Activated CD8-positive, alpha-beta T cell treated with anti-CD3 and anti-CD28 coated beads for 36 hours (primary cell): ENCODE measurements at regions of chr18 and their contacts with region 1.

Region 1: DNA sequence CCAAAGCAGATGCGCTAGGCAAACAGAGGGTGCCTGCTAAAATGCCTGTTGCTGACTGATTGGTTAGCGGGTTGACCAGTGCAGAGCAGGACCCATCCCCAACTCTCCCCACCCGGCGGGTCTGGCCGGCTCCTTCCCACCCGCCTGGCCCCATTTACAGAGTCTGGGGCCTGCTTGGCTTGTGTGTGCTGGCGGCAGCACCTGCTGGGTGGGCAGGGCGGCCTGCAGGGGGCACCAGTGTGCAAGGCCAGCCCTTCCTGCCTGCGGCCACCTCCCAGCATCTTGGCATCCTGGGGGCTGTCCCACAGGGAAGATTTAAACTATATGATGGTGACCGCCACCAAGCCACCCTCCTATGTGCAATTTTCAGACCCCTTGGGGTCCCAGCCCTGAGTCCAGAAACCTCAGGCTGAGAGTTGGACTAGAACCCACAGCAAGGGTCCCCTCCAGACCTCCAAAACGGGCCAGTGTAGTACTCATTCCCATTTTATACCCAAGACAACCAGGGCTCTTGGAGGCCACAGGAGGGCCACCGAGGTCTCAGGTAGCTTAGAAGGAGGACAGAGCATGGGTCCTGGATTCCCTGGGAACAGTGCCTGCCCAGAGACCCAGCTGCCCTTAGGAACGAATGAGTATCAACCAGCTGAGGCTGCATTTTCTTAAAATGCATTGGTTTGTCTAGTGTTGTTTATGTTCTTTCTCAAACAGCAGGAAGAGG is 173.6 kb downstream of the SMAD7 start:
- DNase-seq: peak; percentile 75
- ATAC-seq: peak; percentile 95
- H3K4me3 Mint-ChIP-seq: no peak overlapping the region
- H3K27ac Mint-ChIP-seq: peak overlapping the region; percentile 20
- H3K4me1 Mint-ChIP-seq: peaks cover 5% of the 10 kb centered on the region
- H3K27me3 Mint-ChIP-seq: no peaks in the 10 kb centered on the region
- CTCF ChIP-seq: peak; percentile 93

Region 2: GRCh38 chr18:48848641-48849159 is 71.5 kb after region 1 on chr18:
- CTCF ChIA-PET with region 1: no interaction called
- POLR2A ChIA-PET with region 1: no interaction called
- intact Hi-C with region 1: no loop called
- DNase-seq: no peak
- ATAC-seq: no peak
- H3K4me3 Mint-ChIP-seq: no peak overlapping the region
- H3K27ac Mint-ChIP-seq: no peak overlapping the region
- H3K4me1 Mint-ChIP-seq: peaks cover 47% of the 10 kb centered on the region
- H3K27me3 Mint-ChIP-seq: no peaks in the 10 kb centered on the region
- CTCF ChIP-seq: no peak

Region 3: DNA sequence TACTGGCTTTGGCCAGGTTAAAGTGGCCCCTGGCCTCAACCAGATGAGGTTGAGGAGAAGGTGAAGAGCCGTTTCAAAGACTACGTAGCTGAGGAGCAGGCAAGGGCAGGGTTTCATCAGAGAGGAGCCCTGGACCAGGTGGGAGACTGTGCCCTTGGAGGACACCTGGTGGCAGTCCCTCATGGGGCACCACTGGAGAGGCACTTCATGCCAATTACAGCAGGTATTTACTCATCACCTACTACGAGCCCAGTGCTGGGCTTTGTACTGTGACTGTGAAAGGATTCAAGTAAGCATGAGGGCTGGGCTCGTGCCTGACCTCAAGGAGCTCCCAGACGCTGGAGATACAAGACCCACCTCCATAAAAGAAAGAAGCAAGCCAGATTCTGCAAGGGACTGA is 136.0 kb after region 1 on chr18:
- CTCF ChIA-PET with region 1: interaction called, 28 read pairs
- POLR2A ChIA-PET with region 1: no interaction called
- intact Hi-C with region 1: no loop called
- DNase-seq: peak; percentile 67
- ATAC-seq: peak; percentile 77
- H3K4me3 Mint-ChIP-seq: no peak overlapping the region
- H3K27ac Mint-ChIP-seq: no peak overlapping the region
- H3K4me1 Mint-ChIP-seq: peaks cover 23% of the 10 kb centered on the region
- H3K27me3 Mint-ChIP-seq: no peaks in the 10 kb centered on the region
- CTCF ChIP-seq: peak; percentile 43

Region 4: GRCh38 chr18:48931680-48932461 is 154.7 kb after region 1 on chr18:
- CTCF ChIA-PET with region 1: no interaction called
- POLR2A ChIA-PET with region 1: no interaction called
- intact Hi-C with region 1: no loop called
- DNase-seq: peak; percentile 72
- ATAC-seq: peak; percentile 40
- H3K4me3 Mint-ChIP-seq: peak overlapping the region; percentile 50
- H3K27ac Mint-ChIP-seq: peak overlapping the region; percentile 89
- H3K4me1 Mint-ChIP-seq: peaks cover 92% of the 10 kb centered on the region
- H3K27me3 Mint-ChIP-seq: no peaks in the 10 kb centered on the region
- CTCF ChIP-seq: no peak